MCF 10A (cell line): ENCODE measurements at regions of chr20 and their contacts with region 1.

Region 1: DNA sequence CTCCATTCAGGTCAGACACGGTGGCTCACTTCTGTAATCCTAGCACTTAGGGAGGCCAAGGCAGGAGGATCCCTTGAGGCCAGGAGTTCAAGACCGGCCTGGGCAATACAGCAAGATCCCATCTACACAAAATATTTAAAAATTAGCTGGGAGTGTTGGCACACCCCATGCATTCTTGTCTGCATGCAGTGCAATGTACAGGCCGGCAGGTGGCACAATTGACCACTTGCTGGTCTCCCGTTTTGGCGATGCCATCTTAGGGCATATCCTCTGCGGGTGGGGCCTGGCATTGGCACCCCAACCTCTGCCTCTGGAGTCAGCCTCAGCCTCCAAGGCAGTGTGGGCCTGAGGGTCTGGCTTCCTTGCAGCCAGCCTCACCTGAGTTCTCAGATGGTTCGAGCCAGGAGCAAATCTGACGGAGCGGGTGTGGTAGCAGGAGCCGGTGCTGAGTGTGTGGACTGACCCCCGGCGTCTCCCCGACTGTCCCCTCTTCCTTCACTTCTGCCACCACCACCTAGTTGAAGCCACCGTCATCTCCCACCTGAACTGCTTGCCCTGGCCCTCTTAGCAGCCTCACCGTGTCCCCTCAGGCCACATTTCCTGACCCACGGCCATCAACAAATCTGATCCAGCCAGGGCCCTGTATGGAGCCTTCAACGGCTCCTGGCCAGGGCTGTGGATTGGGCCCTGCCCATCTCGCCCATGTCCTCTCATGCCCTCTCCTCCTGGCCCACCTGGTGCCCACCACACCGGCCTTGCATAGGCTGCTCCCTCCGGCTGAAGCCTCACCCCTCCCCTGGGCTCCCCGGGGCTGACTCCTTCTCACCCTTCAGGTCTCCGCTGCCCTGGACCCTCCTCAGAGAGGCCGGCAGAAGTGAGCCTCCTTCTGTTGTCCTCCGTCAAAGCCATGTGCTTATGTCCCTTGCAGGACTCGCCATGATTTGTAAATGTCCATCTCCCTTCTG is 44.0 kb downstream of the EFCAB8 start:
- DNase-seq: peak; percentile 62
- H3K4me3 Mint-ChIP-seq: no peak overlapping the region
- H3K27ac Mint-ChIP-seq: no peak overlapping the region
- H3K4me1 Mint-ChIP-seq: peaks cover 5% of the 10 kb centered on the region
- H3K27me3 Mint-ChIP-seq: no peaks in the 10 kb centered on the region
- CTCF ChIP-seq: peak; percentile 91

Region 2: GRCh38 chr20:32945710-32946221 is 43.0 kb after region 1 on chr20:
- CTCF ChIA-PET with region 1: interaction called, 27 read pairs
- POLR2A ChIA-PET with region 1: no interaction called
- intact Hi-C with region 1: loop called (anchors 1 kb)
- DNase-seq: peak; percentile 39
- H3K4me3 Mint-ChIP-seq: no peak overlapping the region
- H3K27ac Mint-ChIP-seq: no peak overlapping the region
- H3K4me1 Mint-ChIP-seq: no peaks in the 10 kb centered on the region
- H3K27me3 Mint-ChIP-seq: peaks cover 94% of the 10 kb centered on the region
- CTCF ChIP-seq: peak; percentile 55

Region 3: DNA sequence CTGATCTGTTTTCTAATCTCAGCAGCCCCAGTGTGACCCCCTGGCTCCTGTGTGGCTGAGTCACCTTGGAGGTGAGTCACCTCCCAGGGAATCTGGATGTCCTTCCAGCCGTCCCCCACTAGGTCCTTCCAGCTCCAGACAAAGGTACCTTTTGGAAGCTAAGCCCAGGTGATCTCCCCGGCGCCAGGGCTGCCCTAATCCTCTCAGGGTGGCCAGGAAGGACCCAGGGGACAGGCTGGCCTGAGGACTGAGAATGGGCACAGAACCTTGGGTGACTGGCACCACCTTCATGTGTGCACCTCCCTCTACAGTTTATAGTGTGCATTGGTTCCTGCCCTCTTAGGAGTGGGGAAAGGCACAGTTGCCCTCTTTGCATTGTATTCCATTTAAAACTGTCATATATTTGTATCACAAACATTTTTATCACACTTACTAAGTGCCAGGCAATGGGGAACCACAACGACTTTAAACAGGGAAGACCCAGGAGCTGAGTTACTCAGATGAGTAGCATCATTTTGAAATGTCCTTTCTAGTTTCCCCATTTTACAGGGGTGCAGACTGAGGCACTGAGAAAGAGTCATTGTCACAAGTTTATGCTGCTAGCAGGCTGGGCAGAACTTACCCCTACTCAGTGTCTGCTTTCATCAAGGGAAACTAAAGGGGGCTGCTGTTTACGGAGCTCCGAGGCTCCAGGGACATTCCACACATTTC is 174.1 kb after region 1 on chr20:
- CTCF ChIA-PET with region 1: interaction called, 5 read pairs
- POLR2A ChIA-PET with region 1: no interaction called
- intact Hi-C with region 1: loop called (anchors 5 kb)
- DNase-seq: peak; percentile 27
- H3K4me3 Mint-ChIP-seq: no peak overlapping the region
- H3K27ac Mint-ChIP-seq: no peak overlapping the region
- H3K4me1 Mint-ChIP-seq: no peaks in the 10 kb centered on the region
- H3K27me3 Mint-ChIP-seq: peaks cover 47% of the 10 kb centered on the region
- CTCF ChIP-seq: peak; percentile 26

Region 4: GRCh38 chr20:33097001-33097400 is 194.3 kb after region 1 on chr20:
- CTCF ChIA-PET with region 1: interaction called, 4 read pairs
- POLR2A ChIA-PET with region 1: no interaction called
- intact Hi-C with region 1: loop called (anchors 1 kb)
- DNase-seq: no peak
- H3K4me3 Mint-ChIP-seq: no peak overlapping the region
- H3K27ac Mint-ChIP-seq: no peak overlapping the region
- H3K4me1 Mint-ChIP-seq: no peaks in the 10 kb centered on the region
- H3K27me3 Mint-ChIP-seq: peaks cover 20% of the 10 kb centered on the region
- CTCF ChIP-seq: no peak

Region 5: DNA sequence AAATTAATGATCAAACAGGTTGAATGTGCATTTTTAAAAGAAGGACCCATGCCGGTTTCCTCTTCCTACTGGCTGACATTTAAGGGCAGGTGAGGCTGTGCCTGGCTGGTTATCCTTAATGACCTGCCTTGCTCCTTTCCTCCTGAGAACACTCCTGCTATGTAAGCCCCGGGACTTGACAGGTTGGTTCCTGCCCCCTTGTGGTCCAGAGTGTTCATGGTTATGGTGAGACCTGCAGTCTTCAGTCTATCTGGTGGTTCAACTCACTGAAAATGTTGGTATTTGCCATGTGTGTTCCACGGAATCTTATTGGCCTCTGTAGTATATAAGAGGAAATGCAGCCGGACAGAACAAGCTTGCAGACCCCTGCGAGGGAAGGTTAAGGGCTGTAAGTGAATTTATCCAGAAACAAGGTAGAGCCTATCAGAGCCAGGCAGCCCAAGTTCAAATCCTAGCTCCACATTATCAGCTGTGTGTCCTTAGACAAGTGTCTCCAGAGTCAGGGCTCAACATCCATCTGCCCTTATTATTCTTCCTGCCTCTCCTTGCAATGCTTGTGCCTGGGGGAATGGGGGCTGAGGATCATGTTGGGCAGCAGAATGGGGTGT is 309.2 kb after region 1 on chr20:
- CTCF ChIA-PET with region 1: interaction called, 5 read pairs
- POLR2A ChIA-PET with region 1: no interaction called
- intact Hi-C with region 1: loop called (anchors 1 kb)
- DNase-seq: peak; percentile 61
- H3K4me3 Mint-ChIP-seq: no peak overlapping the region
- H3K27ac Mint-ChIP-seq: no peak overlapping the region
- H3K4me1 Mint-ChIP-seq: no peaks in the 10 kb centered on the region
- H3K27me3 Mint-ChIP-seq: peaks cover 69% of the 10 kb centered on the region
- CTCF ChIP-seq: peak; percentile 20

Region 6: GRCh38 chr20:33299111-33299603 is 396.4 kb after region 1 on chr20:
- CTCF ChIA-PET with region 1: interaction called, 22 read pairs
- POLR2A ChIA-PET with region 1: no interaction called
- intact Hi-C with region 1: loop called (anchors 1 kb)
- DNase-seq: peak; percentile 64
- H3K4me3 Mint-ChIP-seq: no peak overlapping the region
- H3K27ac Mint-ChIP-seq: no peak overlapping the region
- H3K4me1 Mint-ChIP-seq: no peaks in the 10 kb centered on the region
- H3K27me3 Mint-ChIP-seq: peaks cover 68% of the 10 kb centered on the region
- CTCF ChIP-seq: peak; percentile 96

Region 7: GRCh38 chr20:34049897-34050695 is 1147.4 kb after region 1 on chr20:
- CTCF ChIA-PET with region 1: no interaction called
- POLR2A ChIA-PET with region 1: no interaction called
- intact Hi-C with region 1: no loop called
- DNase-seq: no peak
- H3K4me3 Mint-ChIP-seq: no peak overlapping the region
- H3K27ac Mint-ChIP-seq: no peak overlapping the region
- H3K4me1 Mint-ChIP-seq: peaks cover 5% of the 10 kb centered on the region
- H3K27me3 Mint-ChIP-seq: no peaks in the 10 kb centered on the region
- CTCF ChIP-seq: no peak